HepG2 (cell line): ENCODE measurements at regions of chr12 and their contacts with region 1.

Region 1: GRCh38 chr12:97568458-97569180 is 106.0 kb downstream of the RMST start:
- DNase-seq: peak; percentile 99
- ATAC-seq: peak; percentile 97
- H3K4me3 ChIP-seq: peak overlapping the region; percentile 24 to 57 (median 46); a peak in 5 of 6 replicates
- H3K27ac ChIP-seq: peak overlapping the region; percentile 97
- H3K4me1 ChIP-seq: peaks cover 75% of the 10 kb centered on the region
- H3K27me3 ChIP-seq: no peaks in the 10 kb centered on the region
- CTCF ChIP-seq: no peak
- EP300 ChIP-seq: peak; percentile 78 to 97
- POLR2A ChIP-seq: 0 out of 4 replicates have a peak, but pooled peaks of 1 of the 2 experiments have one; percentile 43
- RAD21 ChIP-seq: no peak

Region 2: DNA sequence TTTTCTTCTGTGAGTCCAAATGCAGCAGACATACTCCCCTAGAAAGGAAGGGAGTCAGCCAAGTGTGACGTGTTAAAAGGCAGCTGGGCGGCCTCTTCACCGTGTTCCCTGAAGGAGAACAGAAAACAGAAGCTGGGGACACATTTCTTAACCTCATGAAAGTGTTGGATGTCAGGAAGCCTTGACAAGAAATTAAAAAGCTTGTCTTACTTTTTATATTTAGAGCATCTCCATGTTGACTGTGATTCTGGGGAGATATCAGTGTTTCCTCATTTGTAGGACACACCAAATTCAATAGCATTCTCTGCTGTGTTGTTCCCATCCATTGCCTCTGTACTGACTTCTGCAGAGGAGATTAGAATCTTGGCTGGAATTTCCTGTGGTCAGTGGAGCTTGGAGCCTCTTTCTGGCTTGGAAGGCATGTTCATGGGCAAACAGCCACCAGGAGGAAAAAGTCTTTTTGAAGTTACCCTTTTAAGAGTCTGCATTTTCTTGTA is 12.3 kb before region 1 on chr12:
- CTCF ChIA-PET with region 1: no interaction called
- POLR2A ChIA-PET with region 1: interaction called, 25 read pairs
- in situ Hi-C with region 1: no loop called
- intact Hi-C with region 1: loop called (anchors 1 kb)
- DNase-seq: peak; percentile 77
- ATAC-seq: peak; percentile 99
- H3K4me3 ChIP-seq: no peak overlapping the region
- H3K27ac ChIP-seq: peak overlapping the region; percentile 31
- H3K4me1 ChIP-seq: peaks cover 60% of the 10 kb centered on the region
- H3K27me3 ChIP-seq: no peaks in the 10 kb centered on the region
- CTCF ChIP-seq: no peak
- EP300 ChIP-seq: peak in 1 of 2 experiments; percentile 69; a peak in 2 of 4 replicates
- POLR2A ChIP-seq: no peak
- RAD21 ChIP-seq: no peak

Region 3: DNA sequence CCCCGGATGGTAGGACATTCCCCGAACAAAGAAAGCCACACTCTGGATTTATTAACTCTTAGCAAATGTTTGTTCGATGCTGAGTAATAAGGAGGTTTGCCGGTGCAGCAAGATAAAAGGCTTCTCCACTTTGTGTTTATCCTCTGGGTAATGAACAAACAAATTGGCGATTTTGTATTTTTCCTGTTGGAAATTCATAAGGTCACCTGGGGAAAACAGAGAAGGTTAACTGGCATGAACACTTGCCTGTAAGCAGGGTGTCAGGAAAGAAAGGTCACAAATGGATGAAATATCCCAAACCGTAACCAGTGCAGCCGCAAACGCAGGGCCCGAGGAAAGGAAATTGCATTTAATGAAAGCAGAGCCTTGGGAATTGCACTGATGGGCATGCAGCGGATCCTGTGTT is 26.8 kb after region 1 on chr12:
- CTCF ChIA-PET with region 1: no interaction called
- POLR2A ChIA-PET with region 1: interaction called, 4 read pairs
- in situ Hi-C with region 1: no loop called
- intact Hi-C with region 1: loop called (anchors 2 kb)
- DNase-seq: peak; percentile 74
- ATAC-seq: peak; percentile 87
- H3K4me3 ChIP-seq: peak overlapping the region in 1 of 3 experiments; percentile 33; a peak in 2 of 6 replicates
- H3K27ac ChIP-seq: peak overlapping the region; percentile 47
- H3K4me1 ChIP-seq: peaks cover 43% of the 10 kb centered on the region
- H3K27me3 ChIP-seq: no peaks in the 10 kb centered on the region
- CTCF ChIP-seq: no peak
- EP300 ChIP-seq: peak in 1 of 2 experiments; percentile 95; a peak in 2 of 4 replicates
- POLR2A ChIP-seq: no peak
- RAD21 ChIP-seq: no peak

Region 4: GRCh38 chr12:97630875-97631274 is 62.3 kb after region 1 on chr12:
- CTCF ChIA-PET with region 1: no interaction called
- POLR2A ChIA-PET with region 1: no interaction called
- in situ Hi-C with region 1: no loop called
- intact Hi-C with region 1: no loop called
- DNase-seq: no peak
- ATAC-seq: no peak
- H3K4me3 ChIP-seq: no peak overlapping the region
- H3K27ac ChIP-seq: no peak overlapping the region
- H3K4me1 ChIP-seq: no peaks in the 10 kb centered on the region
- H3K27me3 ChIP-seq: peaks cover 0 to 5% of the 10 kb centered on the region in 2 experiments; a peak in 1 of 5 replicates
- CTCF ChIP-seq: no peak
- EP300 ChIP-seq: no peak
- POLR2A ChIP-seq: no peak
- RAD21 ChIP-seq: no peak

Region 5: DNA sequence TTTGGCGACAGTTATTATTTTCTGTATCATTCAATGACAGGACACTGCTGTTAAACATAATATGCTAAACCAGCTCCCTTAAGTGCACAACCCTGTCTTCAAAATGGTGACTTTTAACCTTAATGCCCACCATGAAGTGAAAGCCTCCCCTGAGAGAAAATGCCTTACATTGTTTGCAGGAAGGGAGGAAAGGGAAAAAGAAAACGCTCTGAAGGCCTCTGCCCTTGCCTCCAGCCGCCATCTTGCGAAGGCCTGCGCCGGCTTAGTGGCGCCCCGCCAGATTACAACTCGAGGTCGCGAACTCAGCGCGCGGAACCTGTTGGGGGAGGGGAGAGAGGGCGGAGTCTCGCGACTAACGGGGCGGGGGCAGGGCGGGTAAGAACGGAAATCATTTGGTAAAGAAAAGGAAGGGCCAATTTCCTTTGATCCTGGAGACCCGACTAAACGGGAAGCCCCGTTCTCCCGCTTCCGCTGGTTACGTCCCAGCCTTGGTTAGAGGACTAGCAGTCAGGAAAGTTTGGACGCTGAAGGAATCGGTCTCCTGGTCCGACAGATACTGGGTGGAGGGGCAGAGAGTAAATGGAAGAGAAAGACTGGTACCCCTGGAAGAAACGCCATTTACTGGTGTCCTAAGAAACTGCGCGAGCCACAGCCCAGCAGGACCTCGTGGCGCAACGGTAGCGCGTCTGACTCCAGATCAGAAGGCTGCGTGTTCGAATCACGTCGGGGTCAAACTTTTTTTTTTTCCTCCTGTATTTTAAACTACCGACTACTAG is 935.2 kb after region 1 on chr12:
- CTCF ChIA-PET with region 1: no interaction called
- POLR2A ChIA-PET with region 1: no interaction called
- in situ Hi-C with region 1: no loop called
- intact Hi-C with region 1: loop called (anchors 5 kb)
- DNase-seq: peak; percentile 84
- ATAC-seq: peak; percentile 58
- H3K4me3 ChIP-seq: peak overlapping the region; percentile 72 to 77 (median 77)
- H3K27ac ChIP-seq: peak overlapping the region; percentile 99
- H3K4me1 ChIP-seq: peaks cover 39% of the 10 kb centered on the region
- H3K27me3 ChIP-seq: no peaks in the 10 kb centered on the region; a peak in 1 of 5 replicates
- CTCF ChIP-seq: peak; percentile 38
- EP300 ChIP-seq: peak in 1 of 2 experiments; percentile 25; a peak in 3 of 4 replicates
- POLR2A ChIP-seq: peak; percentile 65 to 74
- RAD21 ChIP-seq: peak; percentile 4; the same call in 1 of the 2 replicates